ENCODE measurements at regions of chr4 and their contacts with region 1.

Region 1: DNA sequence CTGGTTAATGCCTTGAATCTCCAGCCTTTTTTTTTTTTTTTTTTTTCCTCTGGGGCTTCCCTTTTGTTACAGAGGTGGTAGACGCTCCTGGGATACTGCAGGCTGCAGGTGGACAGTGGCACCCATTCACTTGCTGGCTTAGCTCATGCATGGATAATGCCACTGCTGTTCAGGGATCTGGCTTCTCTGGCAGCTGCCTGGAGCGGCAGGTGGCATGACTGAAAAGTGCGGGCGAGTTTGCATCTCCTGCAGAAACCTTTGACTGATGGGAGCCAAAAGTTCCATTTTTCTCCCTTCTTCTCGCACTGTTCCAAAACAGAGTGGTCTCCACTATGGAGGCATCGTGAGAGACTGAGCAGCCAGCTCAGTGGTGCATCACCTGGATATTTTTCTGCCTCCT is 5.9 kb upstream of the STIM2 start:
- DNase-seq: no peak
- ATAC-seq: no peak
- H3K4me3 ChIP-seq: no peak overlapping the region
- H3K27ac ChIP-seq: no peak overlapping the region
- H3K4me1 ChIP-seq: peaks cover 6% of the 10 kb centered on the region
- H3K27me3 ChIP-seq: no peaks in the 10 kb centered on the region
- CTCF ChIP-seq: no peak
- EP300 ChIP-seq: no peak
- POLR2A ChIP-seq: no peak
- RAD21 ChIP-seq: no peak

Region 2: DNA sequence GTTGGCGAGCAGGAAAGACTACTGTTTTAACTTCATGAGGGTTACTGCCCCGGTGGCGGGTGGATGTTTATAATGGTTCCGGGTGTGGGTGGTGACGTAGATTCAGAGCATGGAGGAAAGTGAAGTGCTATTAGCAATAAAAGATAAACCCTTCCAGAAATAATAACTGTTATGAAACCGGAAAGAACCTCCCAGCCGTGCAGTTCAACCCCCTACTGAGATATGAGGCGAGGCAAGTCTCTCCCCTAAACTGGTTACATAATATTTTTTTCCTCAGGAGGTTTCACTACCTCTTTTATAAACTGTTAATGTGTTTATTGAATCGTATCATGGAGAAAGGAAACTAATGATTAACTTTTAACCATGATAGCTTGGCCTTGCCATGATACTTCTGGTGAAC is 28.0 kb before region 1 on chr4:
- CTCF ChIA-PET with region 1: interaction called, 3 read pairs
- POLR2A ChIA-PET with region 1: interaction called, 9 read pairs
- RAD21 ChIA-PET with region 1: no interaction called
- SMC1A ChIA-PET with region 1: interaction called, 14 read pairs
- in situ Hi-C with region 1: no loop called
- intact Hi-C with region 1: loop called (anchors 1 kb)
- DNase-seq: peak; percentile 72
- ATAC-seq: peak; percentile 94
- H3K4me3 ChIP-seq: 0 out of 2 replicates have a peak overlapping the region, but pooled peaks have one; percentile 31
- H3K27ac ChIP-seq: peak overlapping the region; percentile 20; the same call in 1 of the 2 replicates
- H3K4me1 ChIP-seq: peaks cover 21% of the 10 kb centered on the region
- H3K27me3 ChIP-seq: no peaks in the 10 kb centered on the region
- CTCF ChIP-seq: no peak
- EP300 ChIP-seq: peak; percentile 91 to 93
- POLR2A ChIP-seq: no peak
- RAD21 ChIP-seq: no peak

Measured in GM12878 (cell line).